ENCODE measurements at regions of chr11 and their contacts with region 1.

Region 1: DNA sequence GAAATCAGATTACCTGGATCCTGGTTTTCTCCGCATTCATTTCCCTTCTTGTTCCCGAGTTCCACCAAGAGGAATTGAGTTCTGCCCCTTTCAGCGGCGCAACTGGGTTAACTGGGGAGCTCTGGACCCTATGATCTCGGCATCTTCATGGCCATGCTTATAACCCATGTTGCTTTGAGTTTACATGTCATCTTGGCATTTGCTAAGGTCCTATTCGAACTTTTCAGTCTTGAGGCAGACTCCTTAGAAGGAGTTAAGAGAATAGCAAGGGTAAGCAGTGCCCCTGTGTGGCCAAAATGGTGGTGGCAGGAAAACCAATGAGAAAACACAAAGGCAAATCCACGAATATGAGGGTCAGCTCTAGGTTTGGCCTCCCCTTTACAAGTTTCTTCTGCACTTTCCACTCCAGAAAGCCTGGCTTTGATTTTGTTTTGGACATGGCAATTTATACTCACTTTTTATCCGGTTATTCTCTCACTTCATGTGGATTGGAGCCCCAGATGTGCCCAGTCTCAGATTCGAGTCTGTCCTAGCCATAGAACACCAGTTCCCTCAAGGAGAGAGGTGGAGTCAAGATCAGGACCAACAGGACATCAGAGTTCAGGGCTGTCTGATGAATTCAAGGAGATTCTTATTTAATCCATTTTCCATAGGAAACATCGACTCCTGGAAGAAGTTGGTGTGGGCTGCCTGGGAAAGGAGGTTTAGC is 55.3 kb upstream of the FBXO3 start:
- DNase-seq: peak; percentile 85
- H3K4me3 Mint-ChIP-seq: peak overlapping the region; percentile 57
- H3K27ac Mint-ChIP-seq: no peak overlapping the region
- H3K4me1 Mint-ChIP-seq: peaks cover 2% of the 10 kb centered on the region
- H3K27me3 Mint-ChIP-seq: peaks cover 42% of the 10 kb centered on the region

Region 2: GRCh38 chr11:33542921-33543320 is 286.7 kb before region 1 on chr11:
- CTCF ChIA-PET with region 1: interaction called, 3 read pairs
- intact Hi-C with region 1: loop called (anchors 1 kb)
- DNase-seq: peak; percentile 62
- H3K4me3 Mint-ChIP-seq: no peak overlapping the region
- H3K27ac Mint-ChIP-seq: no peak overlapping the region
- H3K4me1 Mint-ChIP-seq: no peaks in the 10 kb centered on the region
- H3K27me3 Mint-ChIP-seq: peaks cover 23% of the 10 kb centered on the region

Region 3: GRCh38 chr11:33716236-33716635 is 113.4 kb before region 1 on chr11:
- CTCF ChIA-PET with region 1: interaction called, 8 read pairs
- intact Hi-C with region 1: loop called (anchors 1 kb)
- DNase-seq: peak; percentile 39
- H3K4me3 Mint-ChIP-seq: no peak overlapping the region
- H3K27ac Mint-ChIP-seq: no peak overlapping the region
- H3K4me1 Mint-ChIP-seq: peaks cover under 1% of the 10 kb centered on the region
- H3K27me3 Mint-ChIP-seq: no peaks in the 10 kb centered on the region

Region 4: GRCh38 chr11:33808228-33808828 is 21.3 kb before region 1 on chr11:
- CTCF ChIA-PET with region 1: interaction called, 87 read pairs
- intact Hi-C with region 1: loop called (anchors 1 kb)
- DNase-seq: peak; percentile 92
- H3K4me3 Mint-ChIP-seq: no peak overlapping the region
- H3K27ac Mint-ChIP-seq: no peak overlapping the region
- H3K4me1 Mint-ChIP-seq: peaks cover 2% of the 10 kb centered on the region
- H3K27me3 Mint-ChIP-seq: peaks cover 7% of the 10 kb centered on the region

Region 5: DNA sequence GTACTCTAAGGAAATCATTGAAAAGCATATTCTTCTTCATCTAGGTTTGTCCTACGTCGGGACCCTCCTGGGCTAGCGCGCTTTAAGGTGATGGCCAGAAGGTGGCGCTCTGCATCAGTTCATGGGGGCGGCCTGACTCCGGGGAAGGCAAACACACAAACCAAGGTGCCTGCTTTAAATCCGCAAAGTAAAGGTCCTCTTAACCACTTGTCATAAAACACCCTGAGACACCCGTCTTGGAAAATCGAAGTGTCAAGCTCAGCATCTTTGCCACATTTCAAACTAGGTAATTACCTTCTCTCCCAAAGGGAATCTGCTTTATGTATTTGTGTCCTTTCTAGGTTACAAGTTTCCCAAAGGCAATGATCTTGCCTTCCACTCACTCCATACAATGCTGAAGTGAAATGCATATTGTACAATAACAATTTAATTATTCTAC is 28.4 kb after region 1 on chr11:
- CTCF ChIA-PET with region 1: no interaction called
- intact Hi-C with region 1: no loop called
- DNase-seq: peak; percentile 88
- H3K4me3 Mint-ChIP-seq: no peak overlapping the region
- H3K27ac Mint-ChIP-seq: no peak overlapping the region
- H3K4me1 Mint-ChIP-seq: no peaks in the 10 kb centered on the region
- H3K27me3 Mint-ChIP-seq: peaks cover 29% of the 10 kb centered on the region

Measured in activated naive CD4-positive, alpha-beta T cell treated with anti-CD3 and anti-CD28 coated beads for 36 hours (primary cell).